ENCODE measurements at regions of chr6 and their contacts with region 1.

Region 1: DNA sequence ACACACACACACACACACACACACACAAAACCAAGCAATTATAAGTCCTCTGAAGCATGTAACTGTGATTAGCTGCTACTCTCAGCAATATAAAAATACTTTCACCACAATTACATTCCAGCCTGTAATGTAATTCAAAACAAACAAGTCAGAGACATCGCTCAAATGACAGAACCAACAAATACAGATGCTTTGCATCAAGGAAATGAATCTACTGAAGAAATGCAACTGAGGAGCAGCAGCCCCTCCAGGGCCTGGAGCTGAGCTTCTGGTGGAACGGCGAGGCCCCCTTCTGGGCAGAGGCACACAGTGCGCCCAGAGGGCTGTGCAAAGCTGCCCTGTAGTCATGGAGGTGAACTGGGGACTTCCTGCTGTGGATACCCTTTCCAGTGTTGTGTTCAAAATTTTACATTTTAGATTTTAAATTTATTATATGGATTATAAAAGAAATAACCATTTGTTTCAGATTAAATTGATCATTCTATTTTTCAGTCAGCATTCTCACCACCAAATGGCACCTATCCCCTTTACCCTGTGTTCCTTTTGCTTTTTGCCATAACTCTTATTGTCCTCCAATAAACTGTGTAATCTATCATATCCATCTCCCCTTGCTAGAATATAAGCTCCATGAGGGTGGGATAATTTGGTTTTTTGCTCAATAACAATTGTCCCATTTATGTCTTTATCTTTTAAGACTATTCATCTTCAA is 23.2 kb downstream of the ADAT2 start:
- DNase-seq: peak; percentile 73
- ATAC-seq: peak; percentile 97 to 99

Region 2: GRCh38 chr6:142474531-142475289 is 952.6 kb before region 1 on chr6:
- intact Hi-C with region 1: loop called in 1 of 2 experiments (anchors 5 kb)
- DNase-seq: no peak
- ATAC-seq: peak in 1 of 2 donors; percentile 26

Region 3: GRCh38 chr6:142566628-142567396 is 860.5 kb before region 1 on chr6:
- intact Hi-C with region 1: loop called in 1 of 2 experiments (anchors 10 kb)
- DNase-seq: peak; percentile 38
- ATAC-seq: peak in 1 of 2 donors; percentile 61